ENCODE measurements at regions of chr16 and their contacts with region 1.

Region 1: DNA sequence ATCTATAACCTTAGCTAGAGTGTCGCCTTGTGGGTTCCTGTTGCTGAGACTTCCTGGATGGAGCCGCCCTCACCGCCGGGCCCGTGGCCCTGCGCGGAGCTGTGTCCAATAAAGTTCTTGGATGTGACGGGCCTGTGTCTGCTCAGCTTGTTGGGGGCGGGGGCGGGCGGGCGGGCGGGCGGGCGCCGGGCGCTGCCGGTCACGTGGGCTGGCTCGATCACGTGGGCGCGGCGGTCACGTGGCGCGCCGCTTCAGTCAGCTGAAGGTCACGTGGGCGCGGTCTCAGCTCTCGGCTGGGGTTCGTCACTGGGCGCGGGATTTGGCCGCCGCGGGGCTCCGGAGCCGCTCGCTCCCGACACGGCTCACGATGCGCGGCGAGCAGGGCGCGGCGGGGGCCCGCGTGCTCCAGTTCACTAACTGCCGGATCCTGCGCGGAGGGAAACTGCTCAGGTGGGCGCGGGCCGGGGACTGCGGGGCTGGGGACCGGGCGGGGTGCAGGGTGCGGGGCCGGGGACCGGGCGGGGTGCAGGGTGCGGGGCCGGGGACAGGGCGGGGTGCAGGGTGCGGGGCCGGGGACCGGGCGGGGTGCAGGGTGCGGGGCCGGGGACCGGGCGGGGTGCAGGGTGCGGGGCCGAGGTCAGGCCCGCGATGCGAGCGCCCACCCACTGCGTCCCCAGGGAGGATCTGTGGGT is at the start of gene AMDHD2:
- DNase-seq: peak; percentile 95
- ATAC-seq: peak; percentile 60
- H3K4me3 ChIP-seq: peak within 1 kb of the TSS; percentile 2 to 69 (median 60)
- H3K4me3 Mint-ChIP-seq: peak within 1 kb of the TSS; percentile 93
- H3K27ac ChIP-seq: peak within 1 kb of the TSS; percentile 93
- H3K27ac Mint-ChIP-seq: peak within 1 kb of the TSS; percentile 98
- H3K4me1 ChIP-seq: peaks cover 51 to 57% of the 10 kb centered on the region in 2 donors
- H3K4me1 Mint-ChIP-seq: peaks cover 64% of the 10 kb centered on the region
- H3K27me3 ChIP-seq: no peaks in the 10 kb centered on the region
- H3K27me3 Mint-ChIP-seq: no peaks in the 10 kb centered on the region
- CTCF ChIP-seq: no peak
- total RNA-seq, gene AMDHD2: 209 and 226 TPM in 2 replicates

Region 2: DNA sequence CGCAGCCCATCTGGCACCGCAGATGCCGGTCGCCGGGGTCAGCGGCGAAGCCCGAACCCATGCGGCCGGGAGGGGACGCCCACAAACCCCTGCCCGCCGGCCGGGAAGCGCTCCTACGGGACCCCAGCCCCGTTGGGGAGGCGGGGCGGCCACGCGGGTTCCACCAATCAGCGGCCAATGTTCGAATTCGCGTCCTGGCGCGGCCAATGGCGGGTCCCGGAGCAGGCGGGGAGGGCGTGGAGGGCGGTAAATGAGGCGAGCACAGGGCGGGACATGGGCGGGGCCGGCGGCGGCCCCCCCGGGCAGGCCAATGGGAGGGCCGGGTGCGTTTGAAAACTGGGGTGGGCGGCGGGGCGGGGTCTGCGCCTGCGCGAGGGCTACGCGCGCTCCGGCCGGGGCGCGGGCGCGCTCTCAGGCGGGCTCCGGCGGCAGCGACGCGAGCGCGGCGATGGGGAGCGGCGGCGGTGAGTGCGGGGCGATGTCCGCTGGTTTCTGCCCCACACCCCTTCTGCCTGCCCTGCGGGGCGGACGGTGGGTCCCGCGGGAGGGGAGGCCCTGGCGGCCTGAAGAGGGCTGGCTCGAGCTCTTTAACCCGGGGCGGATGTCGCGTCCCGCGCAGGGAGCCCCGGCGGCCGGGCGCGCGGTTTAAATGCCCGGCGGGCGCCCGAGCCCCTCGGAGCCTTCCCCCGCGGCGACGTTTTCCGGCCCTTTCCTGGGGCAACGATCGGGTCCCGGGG is 91.0 kb before region 1 on chr16 and contains the start of gene CCNF:
- CTCF ChIA-PET with region 1: no interaction called
- POLR2A ChIA-PET with region 1: no interaction called
- intact Hi-C with region 1: no loop called
- DNase-seq: peak; percentile 98
- ATAC-seq: peak; percentile 97
- H3K4me3 ChIP-seq: peak within 1 kb of the TSS; percentile 45 to 84 (median 77)
- H3K4me3 Mint-ChIP-seq: peak within 1 kb of the TSS; percentile 96
- H3K27ac ChIP-seq: peak within 1 kb of the TSS in 1 of 2 donors; percentile 53
- H3K27ac Mint-ChIP-seq: peak within 1 kb of the TSS; percentile 85
- H3K4me1 ChIP-seq: peaks cover 9 to 17% of the 10 kb centered on the region in 2 donors
- H3K4me1 Mint-ChIP-seq: peaks cover 13% of the 10 kb centered on the region
- H3K27me3 ChIP-seq: no peaks in the 10 kb centered on the region
- H3K27me3 Mint-ChIP-seq: no peaks in the 10 kb centered on the region
- CTCF ChIP-seq: no peak
- total RNA-seq, gene CCNF: 4.1 and 5.3 TPM in 2 replicates

Region 3: DNA sequence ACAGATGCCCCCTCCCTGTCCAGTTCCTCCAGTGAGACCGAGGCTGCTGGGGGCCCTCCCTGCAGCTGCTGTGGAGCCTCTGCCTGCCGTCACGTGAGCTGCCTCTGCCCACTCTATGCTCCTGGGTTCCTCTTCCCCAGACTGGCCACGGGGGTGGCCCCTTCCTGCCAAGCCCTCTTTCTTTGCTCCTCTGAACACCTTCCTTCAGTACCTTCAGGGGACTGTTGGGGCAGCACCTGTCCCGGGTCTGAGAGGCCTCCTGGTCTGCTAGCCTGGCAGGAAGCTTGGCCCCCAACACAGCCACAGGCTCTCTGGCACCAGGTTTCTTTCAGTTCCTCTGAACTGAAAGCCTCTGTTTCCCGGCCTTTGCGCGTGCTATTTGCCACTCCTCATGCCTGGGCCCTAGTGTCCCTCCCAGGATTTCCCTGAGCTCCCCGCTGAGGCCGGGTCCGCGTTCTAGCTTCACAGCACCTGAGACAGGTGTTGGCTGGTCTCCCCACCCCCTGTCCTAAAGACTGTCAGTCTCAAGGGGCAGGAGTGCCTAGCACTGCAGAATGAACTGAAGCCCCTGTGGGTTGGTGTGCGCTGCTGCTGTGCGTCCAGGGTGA is 13.1 kb before region 1 on chr16:
- CTCF ChIA-PET with region 1: interaction called, 12 read pairs
- POLR2A ChIA-PET with region 1: interaction called, 19 read pairs
- intact Hi-C with region 1: loop called (anchors 1 kb)
- DNase-seq: peak; percentile 89
- ATAC-seq: peak; percentile 91
- H3K4me3 ChIP-seq: peak overlapping the region in 2 of 5 experiments; percentile 1 to 12
- H3K4me3 Mint-ChIP-seq: peak overlapping the region; percentile 56
- H3K27ac ChIP-seq: peak overlapping the region; percentile 83 to 100
- H3K27ac Mint-ChIP-seq: peak overlapping the region; percentile 93
- H3K4me1 ChIP-seq: peaks cover 54 to 60% of the 10 kb centered on the region in 2 donors
- H3K4me1 Mint-ChIP-seq: peaks cover 60% of the 10 kb centered on the region
- H3K27me3 ChIP-seq: no peaks in the 10 kb centered on the region
- H3K27me3 Mint-ChIP-seq: no peaks in the 10 kb centered on the region
- CTCF ChIP-seq: peak; percentile 64

Region 4: DNA sequence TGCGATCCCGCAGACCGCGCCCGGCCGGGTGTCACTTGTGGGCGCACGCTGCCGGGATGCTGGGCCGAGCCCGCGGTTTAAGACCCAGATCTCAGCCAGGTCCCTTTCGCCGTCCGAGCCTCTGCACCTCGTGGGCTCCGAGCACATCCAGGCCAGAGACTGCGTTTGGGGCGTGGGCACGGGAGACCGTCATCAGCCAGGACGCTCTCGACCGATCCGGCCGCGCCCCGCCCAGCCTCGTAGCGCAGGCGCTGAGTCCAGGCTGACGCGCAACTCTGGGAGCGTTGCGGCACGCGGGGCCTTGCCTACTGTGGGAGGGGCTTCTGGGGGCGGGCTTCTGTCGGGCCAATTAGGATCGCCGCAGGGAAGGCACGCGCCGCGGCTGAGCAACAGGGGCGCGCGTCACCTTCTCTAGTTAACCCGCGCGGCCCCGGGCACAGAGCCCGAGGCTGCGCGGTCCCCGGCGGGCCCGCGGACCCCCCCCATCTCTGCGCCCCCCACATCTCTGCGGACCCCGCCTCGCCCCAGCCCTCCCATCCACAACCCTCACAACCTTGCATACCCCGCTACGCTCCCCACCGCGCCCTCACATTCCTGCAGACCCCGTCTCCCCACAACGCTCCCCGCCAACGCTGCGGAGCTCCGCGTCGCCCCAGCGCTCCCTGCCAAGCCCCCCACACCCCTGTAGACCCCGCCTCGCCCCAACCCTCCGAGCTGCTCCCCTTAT is 11.7 kb after region 1 on chr16:
- CTCF ChIA-PET with region 1: interaction called, 11 read pairs
- POLR2A ChIA-PET with region 1: interaction called, 66 read pairs
- intact Hi-C with region 1: loop called (anchors 1 kb)
- DNase-seq: peak; percentile 98
- ATAC-seq: peak; percentile 93
- H3K4me3 ChIP-seq: peak overlapping the region in 4 of 5 experiments; percentile 80 to 93 (median 88)
- H3K4me3 Mint-ChIP-seq: peak overlapping the region; percentile 94
- H3K27ac ChIP-seq: peak overlapping the region; percentile 96 to 100
- H3K27ac Mint-ChIP-seq: peak overlapping the region; percentile 97
- H3K4me1 ChIP-seq: peaks cover 8 to 26% of the 10 kb centered on the region in 2 donors
- H3K4me1 Mint-ChIP-seq: peaks cover 21% of the 10 kb centered on the region
- H3K27me3 ChIP-seq: no peaks in the 10 kb centered on the region
- H3K27me3 Mint-ChIP-seq: no peaks in the 10 kb centered on the region
- CTCF ChIP-seq: no peak

Region 5: GRCh38 chr16:2537453-2538379 is 17.5 kb after region 1 on chr16 and contains the start of gene PDPK1:
- CTCF ChIA-PET with region 1: interaction called, 11 read pairs
- POLR2A ChIA-PET with region 1: interaction called, 66 read pairs
- intact Hi-C with region 1: loop called (anchors 1 kb)
- DNase-seq: peak; percentile 96
- ATAC-seq: peak; percentile 89
- H3K4me3 ChIP-seq: peak within 1 kb of the TSS; percentile 47 to 68 (median 64)
- H3K4me3 Mint-ChIP-seq: peak within 1 kb of the TSS; percentile 89
- H3K27ac ChIP-seq: peak within 1 kb of the TSS; percentile 73 to 77
- H3K27ac Mint-ChIP-seq: peak within 1 kb of the TSS; percentile 92
- H3K4me1 ChIP-seq: peaks cover 33 to 49% of the 10 kb centered on the region in 2 donors
- H3K4me1 Mint-ChIP-seq: peaks cover 41% of the 10 kb centered on the region
- H3K27me3 ChIP-seq: no peaks in the 10 kb centered on the region
- H3K27me3 Mint-ChIP-seq: no peaks in the 10 kb centered on the region
- CTCF ChIP-seq: no peak
- total RNA-seq, gene PDPK1: 84.1 and 86.0 TPM in 2 replicates